CD4-positive, alpha-beta T cell (primary cell): ENCODE measurements at regions of chr9 and their contacts with region 1.

Region 1: GRCh38 chr9:70278312-70278711 is 19.5 kb downstream of the SMC5 start:
- DNase-seq: no peak
- ATAC-seq: no peak
- H3K4me3 ChIP-seq: no peak overlapping the region
- H3K4me3 Mint-ChIP-seq: no peak overlapping the region
- H3K27ac ChIP-seq: no peak overlapping the region
- H3K27ac Mint-ChIP-seq: no peak overlapping the region
- H3K4me1 ChIP-seq: no peaks in the 10 kb centered on the region
- H3K4me1 Mint-ChIP-seq: peaks cover 37% of the 10 kb centered on the region
- H3K27me3 ChIP-seq: no peaks in the 10 kb centered on the region
- H3K27me3 Mint-ChIP-seq: no peaks in the 10 kb centered on the region
- CTCF ChIP-seq: no peak

Region 2: GRCh38 chr9:69785757-69786156 is 492.6 kb before region 1 on chr9:
- CTCF ChIA-PET with region 1: no interaction called
- POLR2A ChIA-PET with region 1: no interaction called
- intact Hi-C with region 1: no loop called
- DNase-seq: no peak
- ATAC-seq: no peak
- H3K4me3 ChIP-seq: no peak overlapping the region
- H3K4me3 Mint-ChIP-seq: no peak overlapping the region
- H3K27ac ChIP-seq: no peak overlapping the region
- H3K27ac Mint-ChIP-seq: no peak overlapping the region
- H3K4me1 ChIP-seq: no peaks in the 10 kb centered on the region
- H3K4me1 Mint-ChIP-seq: no peaks in the 10 kb centered on the region
- H3K27me3 ChIP-seq: peaks cover 5 to 10% of the 10 kb centered on the region in 2 experiments
- H3K27me3 Mint-ChIP-seq: peaks cover 34% of the 10 kb centered on the region
- CTCF ChIP-seq: no peak

Region 3: GRCh38 chr9:70218767-70219166 is 59.5 kb before region 1 on chr9:
- CTCF ChIA-PET with region 1: no interaction called
- POLR2A ChIA-PET with region 1: no interaction called
- intact Hi-C with region 1: no loop called
- DNase-seq: no peak
- ATAC-seq: no peak
- H3K4me3 ChIP-seq: no peak overlapping the region
- H3K4me3 Mint-ChIP-seq: no peak overlapping the region
- H3K27ac ChIP-seq: no peak overlapping the region
- H3K27ac Mint-ChIP-seq: no peak overlapping the region
- H3K4me1 ChIP-seq: no peaks in the 10 kb centered on the region
- H3K4me1 Mint-ChIP-seq: no peaks in the 10 kb centered on the region
- H3K27me3 ChIP-seq: no peaks in the 10 kb centered on the region
- H3K27me3 Mint-ChIP-seq: no peaks in the 10 kb centered on the region
- CTCF ChIP-seq: no peak

Region 4: DNA sequence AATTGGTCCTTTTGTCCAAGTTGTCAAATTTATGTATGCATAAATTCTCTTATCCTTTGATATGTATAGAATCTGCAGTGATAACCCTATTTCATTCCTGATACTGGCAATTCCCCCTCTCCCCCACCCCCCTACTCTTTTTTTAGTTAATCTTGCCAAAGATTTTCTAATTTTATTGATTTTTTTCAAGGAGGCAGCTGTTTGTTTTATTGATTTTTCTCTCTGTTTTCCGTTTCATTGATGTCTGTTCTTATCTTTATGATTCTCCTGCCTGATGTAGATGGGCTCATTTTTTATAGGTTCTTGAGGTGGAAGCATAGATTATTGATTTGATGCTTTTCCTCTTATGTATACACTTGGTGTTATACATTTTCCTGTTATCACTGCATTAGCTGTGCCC is 14.9 kb after region 1 on chr9:
- CTCF ChIA-PET with region 1: no interaction called
- POLR2A ChIA-PET with region 1: no interaction called
- intact Hi-C with region 1: loop called in 1 of 2 experiments (anchors 2 kb)
- DNase-seq: no peak
- ATAC-seq: no peak
- H3K4me3 ChIP-seq: no peak overlapping the region
- H3K4me3 Mint-ChIP-seq: no peak overlapping the region
- H3K27ac ChIP-seq: no peak overlapping the region
- H3K27ac Mint-ChIP-seq: no peak overlapping the region
- H3K4me1 ChIP-seq: no peaks in the 10 kb centered on the region
- H3K4me1 Mint-ChIP-seq: peaks cover 10% of the 10 kb centered on the region
- H3K27me3 ChIP-seq: no peaks in the 10 kb centered on the region
- H3K27me3 Mint-ChIP-seq: no peaks in the 10 kb centered on the region
- CTCF ChIP-seq: no peak

Region 5: GRCh38 chr9:70318002-70318401 is 39.7 kb after region 1 on chr9:
- CTCF ChIA-PET with region 1: no interaction called
- POLR2A ChIA-PET with region 1: no interaction called
- intact Hi-C with region 1: loop called in 1 of 2 experiments (anchors 5 kb)
- DNase-seq: no peak
- ATAC-seq: no peak
- H3K4me3 ChIP-seq: no peak overlapping the region
- H3K4me3 Mint-ChIP-seq: no peak overlapping the region
- H3K27ac ChIP-seq: no peak overlapping the region
- H3K27ac Mint-ChIP-seq: no peak overlapping the region
- H3K4me1 ChIP-seq: no peaks in the 10 kb centered on the region
- H3K4me1 Mint-ChIP-seq: no peaks in the 10 kb centered on the region
- H3K27me3 ChIP-seq: no peaks in the 10 kb centered on the region
- H3K27me3 Mint-ChIP-seq: no peaks in the 10 kb centered on the region
- CTCF ChIP-seq: no peak

Region 6: GRCh38 chr9:70340572-70340971 is 62.3 kb after region 1 on chr9:
- CTCF ChIA-PET with region 1: no interaction called
- POLR2A ChIA-PET with region 1: no interaction called
- intact Hi-C with region 1: loop called in 1 of 2 experiments (anchors 10 kb)
- DNase-seq: peak in 3 of 14 experiments; percentile 38 to 52 (median 42)
- ATAC-seq: no peak
- H3K4me3 ChIP-seq: no peak overlapping the region
- H3K4me3 Mint-ChIP-seq: no peak overlapping the region
- H3K27ac ChIP-seq: no peak overlapping the region
- H3K27ac Mint-ChIP-seq: no peak overlapping the region
- H3K4me1 ChIP-seq: no peaks in the 10 kb centered on the region
- H3K4me1 Mint-ChIP-seq: peaks cover 7% of the 10 kb centered on the region
- H3K27me3 ChIP-seq: no peaks in the 10 kb centered on the region
- H3K27me3 Mint-ChIP-seq: no peaks in the 10 kb centered on the region
- CTCF ChIP-seq: peak; percentile 66